Activated T-helper 1 cell treated with anti-CD3 and anti-CD28 coated beads, Interleukin-12 subunit alpha, Interleukin-12 subunit beta, Interleukin-2, Interleukin-4 antibody, amounts not matched to agents 30 ng/mL and 10 ng/mL and 1 ng/mL, durations not matched to agents 14 hours and 24 hours and 36 hours (primary cell): ENCODE measurements at regions of chr12 and their contacts with region 1.

Region 1: DNA sequence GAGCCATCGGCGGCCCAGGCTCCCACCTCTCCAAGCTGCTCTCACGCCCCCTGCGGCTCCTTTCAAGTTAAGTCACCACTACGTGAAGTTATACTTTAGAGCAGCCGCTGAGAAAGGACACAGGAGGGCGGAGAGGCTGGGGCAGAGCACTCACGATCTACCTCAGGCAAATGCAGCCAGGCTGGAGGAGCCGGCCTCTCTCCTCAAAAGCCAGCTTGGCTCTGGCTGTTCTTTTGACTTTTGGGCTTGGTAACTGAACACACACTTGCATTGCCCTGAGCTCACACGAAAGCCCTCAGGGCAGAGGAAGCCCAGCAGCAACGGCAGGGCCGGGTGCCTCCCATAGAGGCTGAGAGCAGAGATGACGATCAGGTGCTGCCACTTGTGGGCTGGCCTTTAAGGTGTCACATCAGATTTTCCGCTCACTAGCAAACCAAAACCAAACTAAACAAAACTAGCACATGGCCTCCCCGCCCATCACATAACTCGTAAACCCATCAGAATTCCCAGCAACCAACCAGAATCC is 75.2 kb downstream of the PITPNM2 start:
- DNase-seq: peak; percentile 81
- H3K4me3 Mint-ChIP-seq: peak overlapping the region; percentile 86
- H3K27ac Mint-ChIP-seq: peak overlapping the region; percentile 99
- H3K4me1 Mint-ChIP-seq: peaks cover 57% of the 10 kb centered on the region
- H3K27me3 Mint-ChIP-seq: peaks cover 2% of the 10 kb centered on the region

Region 2: GRCh38 chr12:122730215-122731014 is 345.3 kb before region 1 on chr12 and contains the start of gene HCAR1:
- intact Hi-C with region 1: loop called (anchors 5 kb)
- DNase-seq: peak; percentile 74
- H3K4me3 Mint-ChIP-seq: peak within 1 kb of the TSS; percentile 91
- H3K27ac Mint-ChIP-seq: peak within 1 kb of the TSS; percentile 90
- H3K4me1 Mint-ChIP-seq: peaks cover 79% of the 10 kb centered on the region
- H3K27me3 Mint-ChIP-seq: no peaks in the 10 kb centered on the region
- total RNA-seq, gene HCAR1: 7.6 and 8.6 TPM in 2 replicates

Region 3: GRCh38 chr12:122974274-122974891 is 101.3 kb before region 1 on chr12:
- intact Hi-C with region 1: loop called (anchors 1 kb)
- DNase-seq: peak; percentile 98
- H3K4me3 Mint-ChIP-seq: peak overlapping the region; percentile 98
- H3K27ac Mint-ChIP-seq: peak overlapping the region; percentile 98
- H3K4me1 Mint-ChIP-seq: peaks cover 12% of the 10 kb centered on the region
- H3K27me3 Mint-ChIP-seq: peaks cover 3% of the 10 kb centered on the region

Region 4: GRCh38 chr12:123043536-123044001 is 32.1 kb before region 1 on chr12:
- intact Hi-C with region 1: loop called (anchors 1 kb)
- DNase-seq: peak; percentile 60
- H3K4me3 Mint-ChIP-seq: no peak overlapping the region
- H3K27ac Mint-ChIP-seq: peak overlapping the region; percentile 71
- H3K4me1 Mint-ChIP-seq: peaks cover 22% of the 10 kb centered on the region
- H3K27me3 Mint-ChIP-seq: no peaks in the 10 kb centered on the region

Region 5: GRCh38 chr12:123120452-123121166 is 44.9 kb after region 1 on chr12:
- intact Hi-C with region 1: loop called (anchors 1 kb)
- DNase-seq: peak; percentile 20
- H3K4me3 Mint-ChIP-seq: peak overlapping the region; percentile 37
- H3K27ac Mint-ChIP-seq: peak overlapping the region; percentile 84
- H3K4me1 Mint-ChIP-seq: peaks cover 55% of the 10 kb centered on the region
- H3K27me3 Mint-ChIP-seq: no peaks in the 10 kb centered on the region

Region 6: GRCh38 chr12:123200414-123200813 is 124.7 kb after region 1 on chr12:
- intact Hi-C with region 1: loop called (anchors 1 kb)
- DNase-seq: no peak
- H3K4me3 Mint-ChIP-seq: no peak overlapping the region
- H3K27ac Mint-ChIP-seq: peak overlapping the region; percentile 68
- H3K4me1 Mint-ChIP-seq: peaks cover 21% of the 10 kb centered on the region
- H3K27me3 Mint-ChIP-seq: no peaks in the 10 kb centered on the region

Region 7: GRCh38 chr12:123436017-123436964 is 360.6 kb after region 1 on chr12 and contains the start of gene RILPL2:
- intact Hi-C with region 1: loop called (anchors 10 kb)
- DNase-seq: peak; percentile 91
- H3K4me3 Mint-ChIP-seq: peak within 1 kb of the TSS; percentile 99
- H3K27ac Mint-ChIP-seq: peak within 1 kb of the TSS; percentile 99
- H3K4me1 Mint-ChIP-seq: peaks cover 39% of the 10 kb centered on the region
- H3K27me3 Mint-ChIP-seq: no peaks in the 10 kb centered on the region
- total RNA-seq, gene RILPL2: 20.1 and 20.6 TPM in 2 replicates